ENCODE measurements at regions of chr3 and their contacts with region 1.

Region 1: GRCh38 chr3:168517249-168518071 is 421.7 kb upstream of the GOLIM4 start:
- DNase-seq: no peak
- ATAC-seq: no peak
- H3K4me3 ChIP-seq: no peak overlapping the region
- H3K27ac ChIP-seq: no peak overlapping the region
- H3K4me1 ChIP-seq: no peaks in the 10 kb centered on the region
- H3K27me3 ChIP-seq: no peaks in the 10 kb centered on the region
- CTCF ChIP-seq: no peak
- POLR2A ChIP-seq: no peak

Region 2: GRCh38 chr3:168442502-168442901 is 75.0 kb before region 1 on chr3:
- in situ Hi-C with region 1: no loop called
- intact Hi-C with region 1: no loop called
- DNase-seq: no peak
- ATAC-seq: no peak
- H3K4me3 ChIP-seq: no peak overlapping the region
- H3K27ac ChIP-seq: no peak overlapping the region
- H3K4me1 ChIP-seq: no peaks in the 10 kb centered on the region
- H3K27me3 ChIP-seq: no peaks in the 10 kb centered on the region
- CTCF ChIP-seq: no peak
- POLR2A ChIP-seq: no peak

Region 3: DNA sequence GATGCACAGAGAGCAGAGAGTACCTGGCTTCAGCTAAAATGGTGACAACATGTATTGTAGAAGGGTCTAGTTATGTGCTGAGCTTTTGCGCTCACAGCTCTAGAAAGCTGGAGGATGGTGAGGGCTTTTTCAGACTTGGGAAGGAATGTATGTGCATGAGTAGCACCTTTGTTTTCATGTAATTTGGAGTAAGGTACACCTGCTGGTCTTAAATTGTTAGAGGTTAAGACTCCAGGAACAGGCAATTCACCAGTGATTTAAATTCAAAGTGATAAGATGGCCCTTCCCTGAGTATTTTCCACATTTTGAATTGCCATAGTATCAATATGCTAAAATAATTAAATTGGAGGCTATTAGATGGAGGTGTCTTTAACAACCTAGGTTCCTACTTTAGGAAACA is 14.7 kb after region 1 on chr3:
- in situ Hi-C with region 1: no loop called
- intact Hi-C with region 1: loop called (anchors 1 kb)
- DNase-seq: no peak
- ATAC-seq: no peak
- H3K4me3 ChIP-seq: no peak overlapping the region
- H3K27ac ChIP-seq: no peak overlapping the region
- H3K4me1 ChIP-seq: no peaks in the 10 kb centered on the region
- H3K27me3 ChIP-seq: no peaks in the 10 kb centered on the region
- CTCF ChIP-seq: no peak
- POLR2A ChIP-seq: no peak